Dorsolateral prefrontal cortex (tissue), 120 donors: ENCODE measurements at regions of chr7 and their contacts with region 1.

Region 1: DNA sequence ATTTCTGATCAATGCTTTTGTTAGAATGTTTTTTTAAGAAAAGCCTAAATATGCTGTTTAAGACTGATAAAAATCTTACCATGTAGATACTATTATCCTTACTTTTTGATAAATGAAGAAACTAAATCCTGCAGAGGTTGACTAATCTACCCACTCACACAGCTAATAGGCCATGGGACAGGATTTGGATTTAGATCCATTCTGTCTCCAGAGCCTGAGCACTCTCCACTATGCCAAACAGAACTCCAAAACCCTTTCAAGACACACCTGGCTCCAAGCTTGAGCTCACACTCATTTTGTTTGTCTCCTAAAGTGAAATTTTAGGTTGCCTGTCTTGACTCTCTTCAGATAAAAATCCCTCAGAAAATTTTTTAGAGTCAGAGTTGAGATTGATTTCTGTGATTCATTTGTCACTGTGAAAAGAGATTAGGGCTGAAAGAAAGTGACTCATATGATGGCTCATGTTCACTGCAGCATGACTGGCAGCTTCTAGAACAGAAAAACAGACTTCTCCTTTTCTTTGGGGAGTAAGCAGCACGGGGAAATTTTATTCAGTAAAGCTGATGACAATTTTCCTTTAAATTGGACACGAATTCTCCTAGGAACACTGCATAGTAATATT is 132.3 kb upstream of the POT1 start:
- DNase-seq: no peak
- H3K4me3 ChIP-seq: no peak overlapping the region
- H3K27ac ChIP-seq: peak overlapping the region in 9 of 59 donors; percentile 2 to 53 (median 30)
- H3K27me3 ChIP-seq: no peaks in the 10 kb centered on the region
- CTCF ChIP-seq: no peak

Region 2: GRCh38 chr7:124723012-124723411 is 338.9 kb before region 1 on chr7:
- intact Hi-C with region 1: no loop called
- DNase-seq: no peak
- H3K4me3 ChIP-seq: no peak overlapping the region
- H3K27ac ChIP-seq: peak overlapping the region in 58 of 59 donors; percentile 56 to 98 (median 94)
- H3K27me3 ChIP-seq: no peaks in the 10 kb centered on the region
- CTCF ChIP-seq: no peak

Region 3: DNA sequence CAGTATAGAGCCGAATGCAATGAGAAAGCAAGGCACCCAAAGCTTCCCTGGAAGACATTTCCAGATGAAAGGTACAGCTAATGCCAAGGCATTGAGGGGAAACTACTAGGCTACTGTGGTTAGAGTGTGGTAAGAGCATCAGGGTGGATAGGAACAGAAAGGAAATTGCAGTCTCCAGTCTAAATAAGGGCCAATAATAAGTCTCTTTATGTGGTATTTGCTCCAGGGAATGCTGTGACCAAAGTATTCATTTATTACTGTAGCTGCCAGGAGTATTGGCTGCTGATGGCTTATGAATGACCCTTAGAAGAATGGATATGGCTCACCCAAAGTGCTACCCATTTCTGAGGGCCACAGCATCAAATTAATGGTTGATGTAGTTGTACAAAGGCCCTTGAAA is 102.2 kb before region 1 on chr7:
- intact Hi-C with region 1: no loop called
- DNase-seq: no peak
- H3K4me3 ChIP-seq: no peak overlapping the region
- H3K27ac ChIP-seq: no peak overlapping the region
- H3K27me3 ChIP-seq: no peaks in the 10 kb centered on the region
- CTCF ChIP-seq: no peak

Region 4: GRCh38 chr7:125112741-125113309 is 50.9 kb after region 1 on chr7:
- intact Hi-C with region 1: loop called in 1 of 2 experiments (anchors 5 kb)
- DNase-seq: no peak
- H3K4me3 ChIP-seq: no peak overlapping the region
- H3K27ac ChIP-seq: no peak overlapping the region
- H3K27me3 ChIP-seq: no peaks in the 10 kb centered on the region
- CTCF ChIP-seq: no peak

Region 5: DNA sequence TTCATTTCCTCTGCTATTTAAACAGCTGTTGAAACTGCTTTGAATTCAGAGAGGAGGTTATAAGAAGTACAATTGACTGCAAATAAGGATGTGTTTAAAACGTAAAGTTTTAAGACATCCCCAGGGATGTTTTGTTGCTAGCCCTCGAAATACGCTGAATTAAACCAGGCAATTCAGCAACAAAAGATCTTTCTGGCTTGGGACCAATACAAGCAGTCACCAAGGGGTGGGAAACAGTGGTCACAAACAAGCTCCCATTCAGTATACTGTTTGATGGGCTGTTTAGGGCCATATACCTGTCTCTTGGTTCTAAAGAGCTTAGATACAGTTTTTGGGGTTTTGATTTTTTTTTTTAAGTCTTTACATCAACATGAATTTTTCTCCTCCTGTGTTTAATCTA is 314.1 kb after region 1 on chr7:
- intact Hi-C with region 1: no loop called
- DNase-seq: no peak
- H3K4me3 ChIP-seq: no peak overlapping the region
- H3K27ac ChIP-seq: no peak overlapping the region
- H3K27me3 ChIP-seq: no peaks in the 10 kb centered on the region
- CTCF ChIP-seq: no peak

Region 6: GRCh38 chr7:125670926-125671572 is 609.2 kb after region 1 on chr7:
- intact Hi-C with region 1: loop called (anchors 5 kb)
- DNase-seq: no peak
- H3K4me3 ChIP-seq: no peak overlapping the region
- H3K27ac ChIP-seq: no peak overlapping the region
- H3K27me3 ChIP-seq: no peaks in the 10 kb centered on the region
- CTCF ChIP-seq: peak; percentile 40 to 78 (median 64)